CD4-positive, alpha-beta memory T cell (primary cell): ENCODE measurements at regions of chr2 and their contacts with region 1.

Region 1: GRCh38 chr2:203949228-203949627 is 12.7 kb downstream of the ICOS start:
- DNase-seq: peak in 3 of 5 donors; percentile 39 to 60 (median 45)
- H3K4me3 ChIP-seq: no peak overlapping the region
- H3K4me3 Mint-ChIP-seq: peak overlapping the region; percentile 57 to 93 (median 68)
- H3K27ac ChIP-seq: peak overlapping the region; percentile 56
- H3K27ac Mint-ChIP-seq: peak overlapping the region; percentile 88 to 98 (median 93)
- H3K4me1 ChIP-seq: peaks cover 97% of the 10 kb centered on the region
- H3K4me1 Mint-ChIP-seq: peaks cover 71 to 93% (median 83%) of the 10 kb centered on the region in 4 donors
- H3K27me3 ChIP-seq: no peaks in the 10 kb centered on the region
- H3K27me3 Mint-ChIP-seq: no peaks in the 10 kb centered on the region

Region 2: GRCh38 chr2:203814661-203815540 is 134.3 kb before region 1 on chr2:
- CTCF ChIA-PET with region 1: no interaction called
- POLR2A ChIA-PET with region 1: no interaction called
- intact Hi-C with region 1: no loop called
- DNase-seq: peak; percentile 53 to 76 (median 72)
- H3K4me3 ChIP-seq: peak overlapping the region in 1 of 2 donors; percentile 21
- H3K4me3 Mint-ChIP-seq: peak overlapping the region; percentile 57 to 86 (median 80)
- H3K27ac ChIP-seq: no peak overlapping the region
- H3K27ac Mint-ChIP-seq: peak overlapping the region; percentile 30 to 86 (median 74)
- H3K4me1 ChIP-seq: peaks cover 49% of the 10 kb centered on the region
- H3K4me1 Mint-ChIP-seq: peaks cover 20 to 54% (median 38%) of the 10 kb centered on the region in 4 donors
- H3K27me3 ChIP-seq: no peaks in the 10 kb centered on the region
- H3K27me3 Mint-ChIP-seq: no peaks in the 10 kb centered on the region

Region 3: DNA sequence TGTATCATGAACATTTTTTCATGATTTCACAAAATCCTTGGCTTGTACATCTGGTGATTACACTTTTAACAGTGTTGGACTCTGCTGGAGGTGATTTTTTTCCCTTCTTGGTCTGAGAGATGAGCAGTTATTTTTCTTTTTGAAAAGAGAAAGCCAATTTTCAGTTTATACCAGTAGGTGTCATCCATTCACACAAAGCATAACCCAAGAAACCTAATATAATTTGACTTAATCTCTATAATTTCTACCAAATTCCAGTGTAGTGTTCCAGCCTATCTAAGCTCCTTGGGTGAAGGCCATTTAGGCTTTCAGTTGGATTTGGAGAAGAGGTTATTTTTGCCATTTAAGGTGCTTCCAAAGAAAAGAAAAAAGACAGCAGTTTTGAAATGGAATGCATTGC is 20.4 kb before region 1 on chr2:
- CTCF ChIA-PET with region 1: interaction called, 27 read pairs
- POLR2A ChIA-PET with region 1: interaction called, 32 read pairs
- intact Hi-C with region 1: no loop called
- DNase-seq: peak in 1 of 5 donors; percentile 45
- H3K4me3 ChIP-seq: no peak overlapping the region
- H3K4me3 Mint-ChIP-seq: no peak overlapping the region
- H3K27ac ChIP-seq: no peak overlapping the region
- H3K27ac Mint-ChIP-seq: peak overlapping the region in 1 of 7 donors; percentile 22
- H3K4me1 ChIP-seq: peaks cover 20% of the 10 kb centered on the region
- H3K4me1 Mint-ChIP-seq: peaks cover 15 to 41% (median 31%) of the 10 kb centered on the region in 4 donors
- H3K27me3 ChIP-seq: no peaks in the 10 kb centered on the region
- H3K27me3 Mint-ChIP-seq: peaks cover 1 to 2% of the 10 kb centered on the region in 2 donors

Region 4: GRCh38 chr2:203934041-203934492 is 15.2 kb before region 1 on chr2:
- CTCF ChIA-PET with region 1: interaction called, 27 read pairs
- POLR2A ChIA-PET with region 1: interaction called, 32 read pairs
- intact Hi-C with region 1: loop called (anchors 1 kb)
- DNase-seq: peak in 4 of 5 donors; percentile 40 to 81 (median 58)
- H3K4me3 ChIP-seq: peak overlapping the region; percentile 2 to 41
- H3K4me3 Mint-ChIP-seq: peak overlapping the region; percentile 62 to 91 (median 76)
- H3K27ac ChIP-seq: peak overlapping the region; percentile 53
- H3K27ac Mint-ChIP-seq: peak overlapping the region; percentile 92 to 98 (median 96)
- H3K4me1 ChIP-seq: peaks cover 45% of the 10 kb centered on the region
- H3K4me1 Mint-ChIP-seq: peaks cover 39 to 84% (median 54%) of the 10 kb centered on the region in 4 donors
- H3K27me3 ChIP-seq: no peaks in the 10 kb centered on the region
- H3K27me3 Mint-ChIP-seq: no peaks in the 10 kb centered on the region

Region 5: DNA sequence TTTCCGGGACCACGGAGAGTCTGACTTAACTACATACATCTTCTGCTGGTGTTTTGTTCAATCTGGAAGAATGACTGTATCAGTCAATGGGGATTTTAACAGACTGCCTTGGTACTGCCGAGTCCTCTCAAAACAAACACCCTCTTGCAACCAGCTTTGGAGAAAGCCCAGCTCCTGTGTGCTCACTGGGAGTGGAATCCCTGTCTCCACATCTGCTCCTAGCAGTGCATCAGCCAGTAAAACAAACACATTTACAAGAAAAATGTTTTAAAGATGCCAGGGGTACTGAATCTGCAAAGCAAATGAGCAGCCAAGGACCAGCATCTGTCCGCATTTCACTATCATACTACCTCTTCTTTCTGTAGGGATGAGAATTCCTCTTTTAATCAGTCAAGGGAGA is 10.4 kb after region 1 on chr2:
- CTCF ChIA-PET with region 1: interaction called, 7 read pairs
- POLR2A ChIA-PET with region 1: interaction called, 14 read pairs
- intact Hi-C with region 1: no loop called
- DNase-seq: no peak
- H3K4me3 ChIP-seq: no peak overlapping the region
- H3K4me3 Mint-ChIP-seq: no peak overlapping the region
- H3K27ac ChIP-seq: no peak overlapping the region
- H3K27ac Mint-ChIP-seq: peak overlapping the region in 4 of 7 donors; percentile 28 to 59 (median 39)
- H3K4me1 ChIP-seq: peaks cover 28% of the 10 kb centered on the region
- H3K4me1 Mint-ChIP-seq: peaks cover 31 to 53% (median 46%) of the 10 kb centered on the region in 4 donors
- H3K27me3 ChIP-seq: no peaks in the 10 kb centered on the region
- H3K27me3 Mint-ChIP-seq: no peaks in the 10 kb centered on the region

Region 6: GRCh38 chr2:203993560-203993959 is 44.3 kb after region 1 on chr2:
- CTCF ChIA-PET with region 1: interaction called, 4 read pairs
- POLR2A ChIA-PET with region 1: interaction called, 5 read pairs
- intact Hi-C with region 1: loop called (anchors 5 kb)
- DNase-seq: peak in 3 of 5 donors; percentile 19 to 53 (median 34)
- H3K4me3 ChIP-seq: no peak overlapping the region
- H3K4me3 Mint-ChIP-seq: no peak overlapping the region
- H3K27ac ChIP-seq: peak overlapping the region; percentile 10
- H3K27ac Mint-ChIP-seq: no peak overlapping the region
- H3K4me1 ChIP-seq: peaks cover 74% of the 10 kb centered on the region
- H3K4me1 Mint-ChIP-seq: peaks cover 25 to 35% (median 30%) of the 10 kb centered on the region in 4 donors
- H3K27me3 ChIP-seq: no peaks in the 10 kb centered on the region
- H3K27me3 Mint-ChIP-seq: no peaks in the 10 kb centered on the region

Region 7: DNA sequence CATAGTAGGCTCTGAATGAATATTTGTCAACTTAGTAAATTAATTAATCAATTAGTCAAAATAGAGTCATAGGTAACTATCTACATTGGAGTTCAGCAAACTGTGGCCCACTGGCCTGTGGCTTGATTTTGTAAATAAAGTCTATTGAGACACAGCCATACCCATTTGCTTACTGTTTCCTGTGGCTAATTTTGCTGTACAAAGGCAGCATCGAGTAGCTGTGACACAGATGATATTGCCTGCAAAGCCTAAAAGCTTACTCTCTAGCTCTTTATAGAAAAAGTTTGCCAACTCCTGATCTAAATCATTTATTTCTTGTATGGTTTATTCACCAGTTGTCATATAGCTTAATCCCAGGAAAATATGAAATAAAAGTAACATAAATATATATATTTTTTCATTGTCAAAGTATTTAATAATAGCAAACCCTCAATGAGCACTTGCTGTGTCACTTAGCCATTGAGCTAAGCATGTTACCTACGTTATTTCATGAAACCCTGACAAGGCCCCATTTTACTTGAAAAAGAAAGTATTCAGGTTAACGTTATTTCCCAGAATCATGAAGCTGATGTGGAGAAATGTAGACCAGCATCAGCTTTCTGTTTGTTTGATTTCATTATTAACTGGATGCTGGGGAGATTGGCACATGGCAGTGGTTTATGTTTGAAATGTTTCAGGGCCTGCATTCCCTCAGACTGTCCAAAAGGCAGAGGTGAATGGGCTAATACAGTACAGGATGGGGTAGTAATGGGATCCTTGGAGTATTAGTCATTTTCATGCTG is 56.9 kb after region 1 on chr2:
- CTCF ChIA-PET with region 1: interaction called, 4 read pairs
- POLR2A ChIA-PET with region 1: interaction called, 3 read pairs
- intact Hi-C with region 1: loop called (anchors 5 kb)
- DNase-seq: peak in 1 of 5 donors; percentile 32
- H3K4me3 ChIP-seq: no peak overlapping the region
- H3K4me3 Mint-ChIP-seq: peak overlapping the region in 7 of 8 donors; percentile 13 to 70 (median 48)
- H3K27ac ChIP-seq: peak overlapping the region; percentile 26
- H3K27ac Mint-ChIP-seq: peak overlapping the region; percentile 0 to 92 (median 88)
- H3K4me1 ChIP-seq: peaks cover 71% of the 10 kb centered on the region
- H3K4me1 Mint-ChIP-seq: peaks cover 63 to 88% (median 75%) of the 10 kb centered on the region in 4 donors
- H3K27me3 ChIP-seq: no peaks in the 10 kb centered on the region
- H3K27me3 Mint-ChIP-seq: no peaks in the 10 kb centered on the region